ENCODE measurements at regions of chr2 and their contacts with region 1.

Region 1: GRCh38 chr2:231056453-231057424 is at the start of gene PSMD1:
- DNase-seq: peak; percentile 98
- H3K4me3 Mint-ChIP-seq: peak within 1 kb of the TSS; percentile 95
- H3K27ac Mint-ChIP-seq: peak within 1 kb of the TSS; percentile 100
- H3K4me1 Mint-ChIP-seq: peaks cover 56% of the 10 kb centered on the region
- H3K27me3 Mint-ChIP-seq: peaks cover 10% of the 10 kb centered on the region
- total RNA-seq, gene PSMD1: 200 and 203 TPM in 2 replicates

Region 2: GRCh38 chr2:230824406-230824978 is 232.2 kb before region 1 on chr2:
- intact Hi-C with region 1: loop called (anchors 2 kb)
- DNase-seq: peak; percentile 89
- H3K4me3 Mint-ChIP-seq: peak overlapping the region; percentile 55
- H3K27ac Mint-ChIP-seq: no peak overlapping the region
- H3K4me1 Mint-ChIP-seq: peaks cover 11% of the 10 kb centered on the region
- H3K27me3 Mint-ChIP-seq: peaks cover 36% of the 10 kb centered on the region

Region 3: GRCh38 chr2:231124838-231125568 is 68.3 kb after region 1 on chr2 and contains the start of gene HTR2B:
- intact Hi-C with region 1: no loop called
- DNase-seq: peak; percentile 60
- H3K4me3 Mint-ChIP-seq: peak within 1 kb of the TSS; percentile 26
- H3K27ac Mint-ChIP-seq: no peak within 1 kb of the TSS
- H3K4me1 Mint-ChIP-seq: peaks cover 17% of the 10 kb centered on the region
- H3K27me3 Mint-ChIP-seq: no peaks in the 10 kb centered on the region
- total RNA-seq, gene HTR2B: 0.09 TPM in 1 of 2 replicates, not detected in the other